CD4-positive, alpha-beta memory T cell (primary cell): ENCODE measurements at regions of chr2 and their contacts with region 1.

Region 1: DNA sequence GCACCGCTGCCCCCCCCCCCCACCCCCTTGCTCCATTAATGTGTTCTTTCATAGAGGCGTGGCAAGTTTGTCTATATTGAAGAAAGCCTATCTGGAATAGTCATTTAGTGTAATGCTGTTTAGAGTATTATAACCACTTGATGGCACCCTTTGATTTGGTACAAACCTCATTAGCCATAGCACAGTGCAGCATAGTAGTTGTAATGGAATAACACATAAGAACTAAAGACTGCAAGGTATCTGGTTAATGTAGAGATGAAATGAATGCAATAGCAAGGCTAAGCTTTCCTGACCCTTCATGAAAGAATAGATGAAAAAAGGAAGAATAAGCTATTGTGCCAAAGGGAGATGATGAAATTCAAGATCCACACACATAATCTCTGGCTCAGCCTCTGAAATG is 81.9 kb downstream of the EHBP1 start:
- DNase-seq: no peak
- H3K4me3 ChIP-seq: no peak overlapping the region
- H3K4me3 Mint-ChIP-seq: no peak overlapping the region
- H3K27ac ChIP-seq: no peak overlapping the region
- H3K27ac Mint-ChIP-seq: no peak overlapping the region
- H3K4me1 ChIP-seq: no peaks in the 10 kb centered on the region
- H3K4me1 Mint-ChIP-seq: peaks cover 0 to 4% (median under 1%) of the 10 kb centered on the region in 4 donors
- H3K27me3 ChIP-seq: no peaks in the 10 kb centered on the region
- H3K27me3 Mint-ChIP-seq: no peaks in the 10 kb centered on the region

Region 2: GRCh38 chr2:62774555-62775366 is 12.6 kb before region 1 on chr2:
- CTCF ChIA-PET with region 1: interaction called, 14 read pairs
- POLR2A ChIA-PET with region 1: interaction called, 4 read pairs
- intact Hi-C with region 1: no loop called
- DNase-seq: peak in 4 of 5 donors; percentile 25 to 42 (median 32)
- H3K4me3 ChIP-seq: no peak overlapping the region
- H3K4me3 Mint-ChIP-seq: no peak overlapping the region
- H3K27ac ChIP-seq: no peak overlapping the region
- H3K27ac Mint-ChIP-seq: peak overlapping the region in 1 of 7 donors; percentile 75
- H3K4me1 ChIP-seq: no peaks in the 10 kb centered on the region
- H3K4me1 Mint-ChIP-seq: peaks cover 0 to 11% (median 5%) of the 10 kb centered on the region in 4 donors
- H3K27me3 ChIP-seq: no peaks in the 10 kb centered on the region
- H3K27me3 Mint-ChIP-seq: no peaks in the 10 kb centered on the region

Region 3: GRCh38 chr2:63424329-63425078 is 637.1 kb after region 1 on chr2:
- CTCF ChIA-PET with region 1: interaction called, 3 read pairs
- POLR2A ChIA-PET with region 1: no interaction called
- intact Hi-C with region 1: loop called (anchors 5 kb)
- DNase-seq: peak in 4 of 5 donors; percentile 30 to 43 (median 36)
- H3K4me3 ChIP-seq: no peak overlapping the region
- H3K4me3 Mint-ChIP-seq: no peak overlapping the region
- H3K27ac ChIP-seq: no peak overlapping the region
- H3K27ac Mint-ChIP-seq: no peak overlapping the region
- H3K4me1 ChIP-seq: no peaks in the 10 kb centered on the region
- H3K4me1 Mint-ChIP-seq: peaks cover 0 to 4% (median 2%) of the 10 kb centered on the region in 4 donors
- H3K27me3 ChIP-seq: no peaks in the 10 kb centered on the region
- H3K27me3 Mint-ChIP-seq: no peaks in the 10 kb centered on the region

Region 4: GRCh38 chr2:63544017-63544627 is 756.7 kb after region 1 on chr2:
- CTCF ChIA-PET with region 1: no interaction called
- POLR2A ChIA-PET with region 1: no interaction called
- intact Hi-C with region 1: loop called (anchors 2 kb)
- DNase-seq: no peak
- H3K4me3 ChIP-seq: no peak overlapping the region
- H3K4me3 Mint-ChIP-seq: no peak overlapping the region
- H3K27ac ChIP-seq: no peak overlapping the region
- H3K27ac Mint-ChIP-seq: no peak overlapping the region
- H3K4me1 ChIP-seq: no peaks in the 10 kb centered on the region
- H3K4me1 Mint-ChIP-seq: peaks cover 0 to 4% (median under 1%) of the 10 kb centered on the region in 4 donors
- H3K27me3 ChIP-seq: no peaks in the 10 kb centered on the region
- H3K27me3 Mint-ChIP-seq: no peaks in the 10 kb centered on the region